ENCODE measurements at regions of chr2 and their contacts with region 1.

Region 1: GRCh38 chr2:55232084-55232862 is at the starts of genes CLHC1 and RPS27A:
- DNase-seq: peak; percentile 94
- H3K4me3 Mint-ChIP-seq: peak within 1 kb of the TSS; percentile 97
- H3K27ac Mint-ChIP-seq: peak within 1 kb of the TSS; percentile 95
- H3K4me1 Mint-ChIP-seq: peaks cover 52% of the 10 kb centered on the region
- H3K27me3 Mint-ChIP-seq: no peaks in the 10 kb centered on the region
- total RNA-seq, gene CLHC1: 2.4 to 3.1 TPM
- total RNA-seq, gene RPS27A: 1,468 to 1,556 TPM

Region 2: GRCh38 chr2:54558188-54559005 is 673.9 kb before region 1 on chr2:
- CTCF ChIA-PET with region 1: no interaction called
- intact Hi-C with region 1: loop called (anchors 5 kb)
- DNase-seq: peak; percentile 83
- H3K4me3 Mint-ChIP-seq: peak overlapping the region; percentile 87
- H3K27ac Mint-ChIP-seq: peak overlapping the region; percentile 99
- H3K4me1 Mint-ChIP-seq: peaks cover 43% of the 10 kb centered on the region
- H3K27me3 Mint-ChIP-seq: no peaks in the 10 kb centered on the region

Region 3: GRCh38 chr2:55282110-55282917 is 50.0 kb after region 1 on chr2:
- CTCF ChIA-PET with region 1: no interaction called
- intact Hi-C with region 1: loop called (anchors 1 kb)
- DNase-seq: peak; percentile 85
- H3K4me3 Mint-ChIP-seq: peak overlapping the region; percentile 84
- H3K27ac Mint-ChIP-seq: peak overlapping the region; percentile 85
- H3K4me1 Mint-ChIP-seq: peaks cover 22% of the 10 kb centered on the region
- H3K27me3 Mint-ChIP-seq: no peaks in the 10 kb centered on the region

Region 4: GRCh38 chr2:55419679-55420438 is 187.6 kb after region 1 on chr2 and contains the start of gene CCDC88A:
- CTCF ChIA-PET with region 1: no interaction called
- intact Hi-C with region 1: loop called (anchors 1 kb)
- DNase-seq: peak; percentile 89
- H3K4me3 Mint-ChIP-seq: peak within 1 kb of the TSS; percentile 86
- H3K27ac Mint-ChIP-seq: peak within 1 kb of the TSS; percentile 53
- H3K4me1 Mint-ChIP-seq: peaks cover 18% of the 10 kb centered on the region
- H3K27me3 Mint-ChIP-seq: peaks cover 10% of the 10 kb centered on the region
- total RNA-seq, gene CCDC88A: 9.7 to 10.7 TPM

Region 5: DNA sequence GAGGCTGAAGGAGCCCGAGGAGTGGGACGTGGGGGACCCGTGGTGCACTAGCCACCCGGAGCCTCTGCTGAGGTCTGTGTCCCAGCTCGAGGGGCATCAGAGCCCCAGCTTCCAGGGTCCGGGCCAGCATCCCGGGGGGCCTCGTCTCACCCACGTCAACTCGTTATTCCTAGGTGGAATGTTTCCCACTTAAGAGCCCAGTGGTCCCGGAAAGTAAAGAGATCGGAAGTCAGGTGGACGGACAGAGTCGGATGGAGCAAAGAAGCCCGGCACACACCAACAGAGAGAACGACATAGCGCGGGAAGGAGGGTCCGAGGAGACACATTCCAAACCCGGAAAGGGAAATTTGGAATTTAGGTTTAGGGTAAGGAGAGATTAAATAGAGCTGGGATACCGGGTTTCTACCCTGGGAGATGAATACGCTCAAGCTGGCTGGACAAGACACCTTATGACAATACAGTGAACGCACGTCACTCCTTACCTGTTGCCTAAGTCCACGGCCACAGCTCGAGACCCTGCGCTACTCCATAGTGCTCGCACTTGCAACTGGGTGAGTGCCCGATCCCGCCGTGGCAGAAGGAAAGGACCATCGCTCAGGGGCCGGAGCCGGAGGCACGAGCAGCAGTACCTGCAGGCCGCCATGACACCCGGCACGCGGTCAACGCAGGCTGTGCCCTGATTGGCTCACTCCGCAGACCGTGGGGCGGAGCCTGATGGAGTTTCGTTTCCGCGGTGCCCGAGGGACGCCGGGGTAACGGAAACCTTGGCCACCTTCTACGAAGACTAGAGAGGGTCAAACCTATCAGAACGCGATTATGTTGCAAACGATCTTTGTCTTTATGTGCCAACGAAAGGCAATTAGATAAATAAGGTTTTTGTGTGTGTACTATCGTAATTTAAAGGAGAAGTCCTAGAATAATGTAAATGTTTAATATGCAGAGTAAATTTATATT is 461.2 kb after region 1 on chr2 and contains the start of gene PNPT1:
- CTCF ChIA-PET with region 1: no interaction called
- intact Hi-C with region 1: loop called (anchors 1 kb)
- DNase-seq: peak; percentile 96
- H3K4me3 Mint-ChIP-seq: peak within 1 kb of the TSS; percentile 92
- H3K27ac Mint-ChIP-seq: peak within 1 kb of the TSS; percentile 86
- H3K4me1 Mint-ChIP-seq: peaks cover 34% of the 10 kb centered on the region
- H3K27me3 Mint-ChIP-seq: no peaks in the 10 kb centered on the region
- total RNA-seq, gene PNPT1: 54.1 to 60.7 TPM

Measured in activated naive CD4-positive, alpha-beta T cell treated with anti-CD3 and anti-CD28 coated beads for 36 hours (primary cell).